ENCODE measurements at regions of chr7 and their contacts with region 1.

Region 1: GRCh38 chr7:149195180-149196150 is at the start of gene ZNF282:
- DNase-seq: peak; percentile 94
- H3K4me3 ChIP-seq: peak within 1 kb of the TSS; percentile 71 to 89 (median 81)
- H3K27ac ChIP-seq: peak within 1 kb of the TSS; percentile 92 to 95 (median 94)
- H3K4me1 ChIP-seq: peaks cover 0 to 31% (median 25%) of the 10 kb centered on the region in 4 donors
- H3K27me3 ChIP-seq: no peaks in the 10 kb centered on the region
- CTCF ChIP-seq: peak in 3 of 4 experiments; percentile 32 to 62 (median 41)
- EP300 ChIP-seq: no peak
- POLR2A ChIP-seq: peak in 1 of 2 donors; percentile 18
- total RNA-seq, gene ZNF282: 11.8 to 24.9 (median 13.9) TPM

Region 2: DNA sequence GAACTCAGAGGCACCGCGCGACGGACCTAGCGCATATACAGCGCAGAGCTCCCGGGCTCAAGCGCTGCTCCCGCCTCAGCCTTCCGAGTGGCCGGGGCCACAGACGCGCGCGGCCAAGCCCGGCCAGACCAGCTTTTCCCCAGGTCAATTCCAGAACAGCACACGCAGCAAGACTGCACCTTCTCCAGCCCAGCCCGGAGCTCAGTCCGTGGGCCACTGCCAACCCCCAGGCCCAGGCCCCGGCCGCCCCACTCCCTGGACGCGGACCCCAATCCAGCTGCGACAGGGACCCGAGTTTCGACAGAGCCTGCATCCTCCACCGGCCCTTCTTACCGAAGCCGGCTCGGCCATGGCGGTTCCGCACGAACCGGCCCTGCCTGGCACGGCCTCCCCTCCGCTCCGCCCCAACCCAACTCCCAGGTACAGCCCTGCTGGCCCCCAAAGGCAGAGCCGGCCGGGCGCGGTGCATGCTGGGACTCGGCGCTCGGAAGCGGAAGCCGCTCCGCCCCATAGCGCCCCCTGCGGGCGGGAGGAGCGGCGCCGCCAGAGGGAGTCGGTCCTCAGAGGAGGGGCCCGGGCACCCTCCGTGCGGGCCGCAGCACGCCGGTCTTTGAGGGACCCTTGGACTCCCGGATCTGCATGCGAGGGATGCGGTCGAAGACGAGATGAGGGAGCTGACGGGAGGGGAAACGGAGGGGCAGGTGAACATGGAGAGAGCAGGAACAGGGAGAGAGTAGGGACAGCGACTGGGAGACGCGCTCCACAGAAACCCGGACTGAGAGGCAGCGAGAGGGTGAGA is 69.4 kb before region 1 on chr7 and contains the start of gene ZNF425:
- intact Hi-C with region 1: loop called (anchors 5 kb)
- DNase-seq: peak; percentile 95
- H3K4me3 ChIP-seq: peak within 1 kb of the TSS; percentile 87 to 99 (median 90)
- H3K27ac ChIP-seq: peak within 1 kb of the TSS; percentile 96 to 99 (median 97)
- H3K4me1 ChIP-seq: peaks cover 0 to 17% (median 13%) of the 10 kb centered on the region in 4 donors
- H3K27me3 ChIP-seq: no peaks in the 10 kb centered on the region
- CTCF ChIP-seq: peak; percentile 90 to 98 (median 96)
- EP300 ChIP-seq: no peak
- POLR2A ChIP-seq: peak; percentile 87 to 90
- total RNA-seq, gene ZNF425: 2.9 to 4.9 (median 3.6) TPM

Region 3: DNA sequence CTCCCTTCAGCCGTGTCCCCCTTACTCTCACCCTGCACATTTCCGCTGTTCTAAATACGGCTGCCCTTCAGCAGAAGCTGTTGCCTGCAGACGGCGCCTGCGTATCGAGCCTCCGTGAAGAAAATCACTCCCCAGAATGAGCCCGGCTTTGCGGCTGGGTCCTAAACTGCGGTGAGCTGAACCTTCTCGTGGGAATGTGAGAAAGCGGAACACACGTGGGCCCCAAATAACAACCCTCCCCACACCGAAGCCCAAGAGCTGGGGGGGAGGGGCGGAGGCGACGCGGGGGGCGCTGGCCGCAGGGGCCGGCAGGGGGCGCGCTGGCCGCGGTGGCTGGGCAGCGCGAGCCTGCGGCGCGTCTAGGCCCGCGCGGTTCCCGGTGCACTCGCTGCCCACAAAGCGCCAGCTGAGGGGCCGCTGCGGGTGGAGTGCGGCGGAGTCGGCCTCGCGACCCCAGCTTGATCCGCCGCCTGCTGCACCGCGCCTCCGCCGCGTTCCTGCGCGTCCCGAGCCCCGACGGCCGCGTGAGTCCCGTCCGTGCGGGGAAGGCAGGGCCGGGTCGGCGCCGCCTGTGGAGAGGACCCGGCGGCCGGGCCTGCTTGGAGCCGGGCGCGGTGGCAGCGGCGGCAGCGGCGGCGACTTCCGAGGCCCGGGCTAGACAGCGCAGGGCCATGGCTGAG is 48.3 kb before region 1 on chr7 and contains the start of gene ZNF398:
- intact Hi-C with region 1: loop called (anchors 5 kb)
- DNase-seq: peak; percentile 77
- H3K4me3 ChIP-seq: peak within 1 kb of the TSS; percentile 72 to 92 (median 84)
- H3K27ac ChIP-seq: peak within 1 kb of the TSS; percentile 89 to 94 (median 92)
- H3K4me1 ChIP-seq: peaks cover 0 to 31% (median 21%) of the 10 kb centered on the region in 4 donors
- H3K27me3 ChIP-seq: no peaks in the 10 kb centered on the region
- CTCF ChIP-seq: peak; percentile 21 to 84 (median 31)
- EP300 ChIP-seq: no peak
- POLR2A ChIP-seq: no peak
- total RNA-seq, gene ZNF398: 13.0 to 19.7 (median 18.4) TPM

Region 4: DNA sequence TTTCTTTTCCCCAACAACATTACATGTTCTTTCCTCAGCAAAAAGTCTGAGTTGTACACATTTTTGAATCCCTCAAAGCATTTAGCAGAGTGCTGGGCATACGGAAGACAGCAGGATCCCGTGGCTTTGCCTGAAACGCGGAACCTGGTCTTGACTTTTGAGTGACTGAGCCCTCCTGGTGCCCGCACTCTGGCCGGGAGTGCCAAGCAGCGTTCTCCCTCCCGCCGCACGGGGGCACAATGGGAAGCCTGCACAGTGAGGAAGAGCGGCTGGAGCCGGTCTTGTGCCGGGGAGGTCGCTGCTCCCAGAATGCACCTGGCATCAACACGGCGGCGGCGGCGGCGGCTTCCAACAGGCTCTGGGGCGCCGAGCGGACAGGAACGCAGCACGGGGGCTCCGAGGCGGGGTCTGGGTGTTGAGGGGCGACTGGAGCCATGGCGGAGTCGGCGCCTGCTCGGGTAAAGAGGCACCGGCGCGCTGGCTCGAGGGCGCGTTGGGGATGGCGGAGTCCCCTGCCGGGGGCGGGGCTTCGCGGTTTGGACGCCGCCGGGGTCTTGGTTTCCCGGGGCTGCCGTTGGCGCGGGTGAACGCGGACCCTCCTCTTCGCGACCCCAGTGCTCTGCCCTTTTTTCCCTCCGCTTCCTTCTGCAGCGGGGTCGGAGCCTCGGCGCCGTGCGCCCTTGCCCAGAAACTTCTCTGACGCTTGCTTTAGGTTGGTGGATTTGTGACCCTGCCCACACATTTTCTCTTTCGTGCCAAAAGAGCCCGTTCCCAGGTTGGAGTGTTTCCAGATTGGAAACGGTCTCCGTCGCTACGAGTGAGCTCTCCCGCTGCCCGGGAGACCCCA is 44.1 kb after region 1 on chr7 and contains the start of gene ZNF212:
- intact Hi-C with region 1: loop called (anchors 5 kb)
- DNase-seq: peak; percentile 92
- H3K4me3 ChIP-seq: peak within 1 kb of the TSS; percentile 69 to 86 (median 78)
- H3K27ac ChIP-seq: peak within 1 kb of the TSS; percentile 64 to 81 (median 72)
- H3K4me1 ChIP-seq: peaks cover 0 to 22% (median 17%) of the 10 kb centered on the region in 4 donors
- H3K27me3 ChIP-seq: peaks cover 0 to 2% (median 0%) of the 10 kb centered on the region in 3 donors
- CTCF ChIP-seq: peak; percentile 64 to 80 (median 70)
- EP300 ChIP-seq: no peak
- POLR2A ChIP-seq: no peak
- total RNA-seq, gene ZNF212: 4.1 to 13.6 (median 5.7) TPM

Region 5: GRCh38 chr7:149261829-149262617 is 66.6 kb after region 1 on chr7 and contains the start of gene ZNF783:
- intact Hi-C with region 1: loop called (anchors 10 kb)
- DNase-seq: peak; percentile 93
- H3K4me3 ChIP-seq: peak within 1 kb of the TSS; percentile 28 to 75 (median 64)
- H3K27ac ChIP-seq: peak within 1 kb of the TSS; percentile 90 to 97 (median 93)
- H3K4me1 ChIP-seq: peaks cover 0 to 26% (median 22%) of the 10 kb centered on the region in 4 donors
- H3K27me3 ChIP-seq: no peaks in the 10 kb centered on the region
- CTCF ChIP-seq: peak in 2 of 4 experiments; percentile 31 to 87
- EP300 ChIP-seq: no peak
- POLR2A ChIP-seq: no peak
- total RNA-seq, gene ZNF783: 8.4 to 15.2 (median 11.3) TPM

Region 6: DNA sequence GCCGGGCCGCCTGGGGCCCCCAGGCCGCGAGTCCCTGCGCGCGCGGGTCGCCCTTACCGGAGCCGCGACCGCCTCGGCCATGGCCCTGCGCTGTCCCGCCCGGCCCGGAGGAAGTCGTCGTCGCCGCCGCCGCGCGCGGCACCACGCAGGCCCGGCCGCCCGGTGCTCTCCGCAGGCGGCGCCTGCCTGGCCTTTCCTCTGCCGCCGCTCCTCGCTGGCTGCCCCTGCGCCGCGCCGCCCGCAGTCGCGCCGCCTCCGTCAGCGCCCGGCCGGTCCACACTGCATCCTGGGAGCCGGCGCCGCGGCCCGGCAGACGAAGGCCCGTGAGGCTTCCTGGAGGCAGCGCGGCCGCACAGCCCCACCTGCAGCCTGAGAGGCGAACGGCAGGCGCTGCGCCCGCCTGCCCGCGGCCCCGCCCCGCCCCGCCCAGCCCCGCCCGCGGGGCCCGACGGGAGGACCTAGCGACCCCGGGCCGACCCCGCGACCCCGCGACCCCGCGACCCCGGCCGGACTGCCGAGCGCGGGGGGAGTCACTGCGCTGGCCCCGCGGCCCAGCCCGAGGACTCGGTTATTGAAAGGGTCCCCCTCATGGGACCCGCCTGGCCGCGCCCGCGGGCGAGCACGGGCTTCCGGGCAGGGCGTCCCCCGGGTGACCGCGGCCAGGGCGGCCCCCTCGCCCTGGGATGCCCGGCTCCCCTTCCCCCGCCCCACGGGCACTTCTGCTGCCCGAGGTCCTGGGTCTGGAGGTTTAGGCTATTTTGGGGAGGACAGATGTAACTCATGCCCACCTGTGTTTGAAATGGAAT is 302.2 kb after region 1 on chr7 and contains the start of gene ZNF746:
- intact Hi-C with region 1: loop called (anchors 5 kb)
- DNase-seq: peak; percentile 89
- H3K4me3 ChIP-seq: peak within 1 kb of the TSS; percentile 61 to 93 (median 84)
- H3K27ac ChIP-seq: peak within 1 kb of the TSS; percentile 84 to 96 (median 94)
- H3K4me1 ChIP-seq: peaks cover 0 to 24% (median 20%) of the 10 kb centered on the region in 4 donors
- H3K27me3 ChIP-seq: no peaks in the 10 kb centered on the region
- CTCF ChIP-seq: peak in 1 of 4 experiments; percentile 47
- EP300 ChIP-seq: no peak
- POLR2A ChIP-seq: no peak
- total RNA-seq, gene ZNF746: 16.4 to 18.9 (median 17.7) TPM

Region 7: GRCh38 chr7:149714050-149714909 is 518.8 kb after region 1 on chr7:
- intact Hi-C with region 1: loop called (anchors 10 kb)
- DNase-seq: peak; percentile 94
- H3K4me3 ChIP-seq: peak overlapping the region; percentile 59 to 84 (median 75)
- H3K27ac ChIP-seq: peak overlapping the region; percentile 78 to 84 (median 82)
- H3K4me1 ChIP-seq: peaks cover 0 to 45% (median 28%) of the 10 kb centered on the region in 4 donors
- H3K27me3 ChIP-seq: no peaks in the 10 kb centered on the region
- CTCF ChIP-seq: no peak
- EP300 ChIP-seq: no peak
- POLR2A ChIP-seq: no peak

Measured in sigmoid colon (tissue), 7 donors.